ENCODE measurements at regions of chr14 and their contacts with region 1.

Region 1: GRCh38 chr14:75982266-75983018 is 647 bp upstream of the TGFB3 start:
- H3K4me3 Mint-ChIP-seq: peak overlapping the region; percentile 75
- H3K27ac Mint-ChIP-seq: peak overlapping the region; percentile 66
- H3K4me1 Mint-ChIP-seq: peaks cover 42% of the 10 kb centered on the region
- H3K27me3 Mint-ChIP-seq: peaks cover 48% of the 10 kb centered on the region

Region 2: DNA sequence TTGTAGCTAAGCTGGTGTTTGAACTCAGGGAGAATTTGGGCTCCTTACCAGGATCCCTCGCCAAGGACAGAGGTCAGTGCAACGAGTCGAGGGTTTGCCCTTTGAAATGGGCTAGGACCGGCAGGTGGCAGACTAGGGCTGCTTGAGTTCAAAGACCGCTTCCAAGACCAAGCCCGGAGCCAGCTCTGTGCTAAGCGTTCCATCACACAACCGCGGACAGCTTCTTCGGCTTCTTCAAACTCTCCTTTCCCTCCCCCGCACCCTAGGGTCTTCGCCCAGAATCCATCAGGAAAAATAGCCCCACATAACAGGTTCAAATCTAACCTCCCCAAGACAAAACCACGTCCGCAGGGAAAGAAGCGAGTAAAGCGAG is 404.7 kb before region 1 on chr14:
- intact Hi-C with region 1: loop called (anchors 5 kb)
- H3K4me3 Mint-ChIP-seq: no peak overlapping the region
- H3K27ac Mint-ChIP-seq: no peak overlapping the region
- H3K4me1 Mint-ChIP-seq: peaks cover 19% of the 10 kb centered on the region
- H3K27me3 Mint-ChIP-seq: no peaks in the 10 kb centered on the region

Region 3: DNA sequence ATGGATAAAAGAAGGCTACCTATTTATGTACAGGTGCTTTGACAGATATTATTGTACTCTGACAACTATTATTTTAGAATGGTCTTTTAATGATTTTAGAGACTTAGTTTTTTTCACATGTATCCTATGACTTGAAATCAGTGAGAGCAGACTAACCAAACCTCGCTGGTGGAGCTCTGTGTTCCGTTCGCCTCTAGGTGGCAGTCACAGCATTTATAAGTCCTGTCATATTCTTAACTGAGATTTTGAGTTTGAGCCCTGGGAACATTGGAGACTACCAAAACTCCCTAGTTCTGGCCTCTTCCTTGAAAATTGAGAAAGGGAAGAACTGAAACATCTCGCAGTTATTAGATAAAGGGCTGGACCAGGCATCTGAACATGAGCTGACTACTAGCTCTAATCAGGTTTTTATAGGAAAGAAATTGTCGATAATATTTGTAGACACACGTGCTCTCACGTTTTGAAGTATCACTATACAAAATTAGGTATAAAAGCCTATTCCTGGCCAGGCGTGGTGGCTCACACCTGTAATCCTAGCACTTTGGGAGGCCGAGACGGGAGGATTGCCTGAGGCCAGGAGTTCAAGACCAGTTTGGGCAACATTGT is 273.1 kb before region 1 on chr14:
- intact Hi-C with region 1: loop called (anchors 2 kb)
- H3K4me3 Mint-ChIP-seq: no peak overlapping the region
- H3K27ac Mint-ChIP-seq: no peak overlapping the region
- H3K4me1 Mint-ChIP-seq: no peaks in the 10 kb centered on the region
- H3K27me3 Mint-ChIP-seq: no peaks in the 10 kb centered on the region

Region 4: GRCh38 chr14:75905147-75905904 is 77.1 kb before region 1 on chr14:
- intact Hi-C with region 1: loop called (anchors 1 kb)
- H3K4me3 Mint-ChIP-seq: peak overlapping the region; percentile 2
- H3K27ac Mint-ChIP-seq: peak overlapping the region; percentile 57
- H3K4me1 Mint-ChIP-seq: peaks cover 26% of the 10 kb centered on the region
- H3K27me3 Mint-ChIP-seq: no peaks in the 10 kb centered on the region

Region 5: DNA sequence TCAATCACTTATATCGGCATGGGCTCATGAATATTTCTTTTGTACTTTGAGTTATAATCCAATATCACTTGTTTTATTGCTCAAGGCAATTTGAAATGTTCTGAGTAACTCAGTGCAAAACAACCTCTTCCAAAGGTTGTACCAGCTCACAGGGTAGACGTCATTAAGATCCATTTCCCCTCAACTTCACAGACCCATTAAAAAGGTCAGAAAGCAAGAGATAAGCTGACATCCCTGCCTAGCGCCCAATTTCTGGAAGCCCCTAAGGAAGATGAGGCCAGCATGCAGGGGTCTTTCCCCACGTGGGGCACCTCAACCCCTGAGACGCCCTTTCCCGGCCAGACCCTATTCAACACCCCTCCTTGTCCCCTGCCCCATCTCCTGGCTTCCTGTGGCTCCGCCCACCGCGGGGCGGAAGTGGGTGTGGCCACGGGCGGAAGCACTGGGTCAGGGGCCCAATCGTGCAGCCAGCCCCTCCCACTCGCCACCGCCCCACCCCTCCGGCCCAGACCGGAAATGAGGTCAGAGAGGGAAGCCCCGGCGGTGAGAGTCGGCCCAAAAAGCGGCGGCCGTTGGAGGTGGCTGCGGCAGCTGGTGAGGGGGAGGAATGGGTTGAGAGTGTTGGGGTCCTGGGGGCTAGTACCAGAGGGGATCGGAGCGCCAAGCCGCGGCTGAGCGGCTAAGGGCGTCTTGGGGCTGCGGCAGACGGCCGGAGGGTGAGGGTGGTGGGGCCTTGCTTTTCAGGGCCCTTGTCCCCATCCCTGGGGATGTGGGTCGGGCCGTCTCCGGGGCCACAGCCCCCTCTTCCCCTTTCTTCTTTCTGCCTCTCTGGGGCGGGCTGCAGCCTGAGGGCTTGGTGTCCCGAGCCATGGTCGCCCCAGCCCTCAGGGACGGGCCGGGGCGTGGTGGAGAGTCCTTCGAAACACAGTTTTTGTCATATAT is 169.2 kb after region 1 on chr14 and contains the start of gene GPATCH2L:
- intact Hi-C with region 1: loop called (anchors 10 kb)
- H3K4me3 Mint-ChIP-seq: peak within 1 kb of the TSS; percentile 94
- H3K27ac Mint-ChIP-seq: peak within 1 kb of the TSS; percentile 95
- H3K4me1 Mint-ChIP-seq: peaks cover 44% of the 10 kb centered on the region
- H3K27me3 Mint-ChIP-seq: peaks cover 14% of the 10 kb centered on the region

Region 6: GRCh38 chr14:76191297-76191696 is 208.9 kb after region 1 on chr14:
- intact Hi-C with region 1: no loop called
- H3K4me3 Mint-ChIP-seq: peak overlapping the region; percentile 20
- H3K27ac Mint-ChIP-seq: peak overlapping the region; percentile 88
- H3K4me1 Mint-ChIP-seq: peaks cover 55% of the 10 kb centered on the region
- H3K27me3 Mint-ChIP-seq: no peaks in the 10 kb centered on the region